CD4-positive, alpha-beta T cell (primary cell): ENCODE measurements at regions of chr6 and their contacts with region 1.

Region 1: GRCh38 chr6:11381801-11382513 is 149.5 kb upstream of the NEDD9 start:
- DNase-seq: peak; percentile 41 to 94 (median 59)
- ATAC-seq: peak; percentile 93
- H3K4me3 ChIP-seq: peak overlapping the region; percentile 71
- H3K4me3 Mint-ChIP-seq: peak overlapping the region; percentile 85
- H3K27ac ChIP-seq: peak overlapping the region; percentile 84 to 86
- H3K27ac Mint-ChIP-seq: peak overlapping the region; percentile 93
- H3K4me1 ChIP-seq: peaks cover 48% of the 10 kb centered on the region
- H3K4me1 Mint-ChIP-seq: peaks cover 69% of the 10 kb centered on the region
- H3K27me3 ChIP-seq: no peaks in the 10 kb centered on the region
- H3K27me3 Mint-ChIP-seq: no peaks in the 10 kb centered on the region
- CTCF ChIP-seq: no peak

Region 2: GRCh38 chr6:11366183-11366933 is 15.6 kb before region 1 on chr6:
- CTCF ChIA-PET with region 1: interaction called, 3 read pairs
- POLR2A ChIA-PET with region 1: interaction called, 29 read pairs
- intact Hi-C with region 1: no loop called
- DNase-seq: peak in 7 of 14 experiments; percentile 12 to 81 (median 26)
- ATAC-seq: peak; percentile 73
- H3K4me3 ChIP-seq: peak overlapping the region; percentile 11
- H3K4me3 Mint-ChIP-seq: peak overlapping the region; percentile 57
- H3K27ac ChIP-seq: peak overlapping the region in 1 of 2 donors; percentile 35
- H3K27ac Mint-ChIP-seq: peak overlapping the region; percentile 76
- H3K4me1 ChIP-seq: peaks cover 34% of the 10 kb centered on the region
- H3K4me1 Mint-ChIP-seq: peaks cover 85% of the 10 kb centered on the region
- H3K27me3 ChIP-seq: no peaks in the 10 kb centered on the region
- H3K27me3 Mint-ChIP-seq: no peaks in the 10 kb centered on the region
- CTCF ChIP-seq: no peak

Region 3: GRCh38 chr6:11414176-11414963 is 32.4 kb after region 1 on chr6:
- CTCF ChIA-PET with region 1: no interaction called
- POLR2A ChIA-PET with region 1: interaction called, 14 read pairs
- intact Hi-C with region 1: no loop called
- DNase-seq: peak in 11 of 14 experiments; percentile 2 to 87 (median 25)
- ATAC-seq: peak; percentile 96
- H3K4me3 ChIP-seq: no peak overlapping the region
- H3K4me3 Mint-ChIP-seq: peak overlapping the region; percentile 43
- H3K27ac ChIP-seq: peak overlapping the region in 1 of 2 donors; percentile 18
- H3K27ac Mint-ChIP-seq: peak overlapping the region; percentile 31
- H3K4me1 ChIP-seq: peaks cover 9% of the 10 kb centered on the region
- H3K4me1 Mint-ChIP-seq: peaks cover 26% of the 10 kb centered on the region
- H3K27me3 ChIP-seq: no peaks in the 10 kb centered on the region
- H3K27me3 Mint-ChIP-seq: no peaks in the 10 kb centered on the region
- CTCF ChIP-seq: no peak